ENCODE measurements at regions of chr5 and their contacts with region 1.

Region 1: GRCh38 chr5:170100066-170100943 is 5.4 kb upstream of the FOXI1 start:
- DNase-seq: peak; percentile 38 to 67 (median 64)
- ATAC-seq: peak; percentile 65
- H3K4me3 ChIP-seq: no peak overlapping the region
- H3K4me3 Mint-ChIP-seq: no peak overlapping the region
- H3K27ac ChIP-seq: no peak overlapping the region
- H3K27ac Mint-ChIP-seq: peak overlapping the region in 2 of 9 donors; percentile 6 to 43
- H3K4me1 ChIP-seq: no peaks in the 10 kb centered on the region
- H3K4me1 Mint-ChIP-seq: peaks cover 0 to 10% (median 0%) of the 10 kb centered on the region in 7 donors
- H3K27me3 ChIP-seq: no peaks in the 10 kb centered on the region
- H3K27me3 Mint-ChIP-seq: peaks cover 3 to 16% (median 6%) of the 10 kb centered on the region in 5 donors

Region 2: GRCh38 chr5:170183816-170184687 is 83.7 kb after region 1 on chr5:
- CTCF ChIA-PET with region 1: no interaction called
- POLR2A ChIA-PET with region 1: no interaction called
- intact Hi-C with region 1: loop called (anchors 1 kb)
- DNase-seq: peak in 4 of 9 donors; percentile 4 to 51 (median 8)
- ATAC-seq: peak; percentile 60
- H3K4me3 ChIP-seq: no peak overlapping the region
- H3K4me3 Mint-ChIP-seq: no peak overlapping the region
- H3K27ac ChIP-seq: no peak overlapping the region
- H3K27ac Mint-ChIP-seq: no peak overlapping the region
- H3K4me1 ChIP-seq: no peaks in the 10 kb centered on the region
- H3K4me1 Mint-ChIP-seq: no peaks in the 10 kb centered on the region
- H3K27me3 ChIP-seq: no peaks in the 10 kb centered on the region
- H3K27me3 Mint-ChIP-seq: peaks cover 0 to 12% (median 4%) of the 10 kb centered on the region in 5 donors

Region 3: GRCh38 chr5:170216266-170216864 is 116.1 kb after region 1 on chr5:
- CTCF ChIA-PET with region 1: interaction called, 4 read pairs
- POLR2A ChIA-PET with region 1: no interaction called
- intact Hi-C with region 1: loop called in 1 of 2 experiments (anchors 1 kb)
- DNase-seq: peak in 1 of 9 donors; percentile 26
- ATAC-seq: no peak
- H3K4me3 ChIP-seq: no peak overlapping the region
- H3K4me3 Mint-ChIP-seq: no peak overlapping the region
- H3K27ac ChIP-seq: no peak overlapping the region
- H3K27ac Mint-ChIP-seq: no peak overlapping the region
- H3K4me1 ChIP-seq: no peaks in the 10 kb centered on the region
- H3K4me1 Mint-ChIP-seq: no peaks in the 10 kb centered on the region
- H3K27me3 ChIP-seq: no peaks in the 10 kb centered on the region
- H3K27me3 Mint-ChIP-seq: peaks cover 0 to 34% (median 0%) of the 10 kb centered on the region in 5 donors

Region 4: DNA sequence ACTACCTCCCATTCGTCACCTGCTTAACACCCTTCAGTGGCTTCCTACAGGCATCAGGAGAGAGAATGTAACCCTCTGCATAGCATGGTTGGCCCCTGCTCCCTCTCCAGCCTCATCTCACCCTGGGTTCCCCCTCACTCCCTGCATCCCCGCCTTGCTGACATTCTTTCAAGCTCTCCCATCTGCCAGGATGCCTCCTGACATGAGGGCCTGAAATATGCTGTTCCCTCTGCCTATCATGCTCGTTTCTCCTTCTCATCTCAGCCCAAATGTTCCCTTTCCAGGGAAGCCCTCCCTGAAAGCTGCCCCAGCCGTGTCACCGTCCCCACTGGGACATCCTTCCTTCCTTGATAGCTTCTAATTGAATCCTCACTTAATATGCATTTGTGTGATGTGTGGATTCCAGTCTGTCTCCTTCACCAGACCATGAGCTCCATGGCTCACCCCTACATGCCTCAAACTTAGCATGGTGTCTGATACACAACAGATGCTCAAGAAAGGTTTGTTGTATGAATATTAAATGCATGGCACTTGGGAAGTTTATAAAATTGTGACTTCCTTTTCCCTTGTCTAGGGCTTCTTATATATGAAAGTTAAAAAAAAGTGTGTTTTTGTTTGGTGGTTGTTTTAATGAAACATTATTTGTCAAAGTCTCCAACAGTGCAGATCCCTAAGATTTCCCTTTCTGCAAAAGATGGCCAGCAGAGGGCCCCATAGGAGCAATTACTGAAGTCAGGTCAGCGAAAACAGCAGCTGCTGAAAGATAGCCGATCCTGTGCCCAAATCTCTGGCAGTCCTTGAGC is 125.2 kb after region 1 on chr5:
- CTCF ChIA-PET with region 1: interaction called, 4 read pairs
- POLR2A ChIA-PET with region 1: no interaction called
- intact Hi-C with region 1: loop called (anchors 2 kb)
- DNase-seq: peak; percentile 45 to 78 (median 69)
- ATAC-seq: peak; percentile 75
- H3K4me3 ChIP-seq: no peak overlapping the region
- H3K4me3 Mint-ChIP-seq: peak overlapping the region in 1 of 10 donors; percentile 15
- H3K27ac ChIP-seq: no peak overlapping the region
- H3K27ac Mint-ChIP-seq: peak overlapping the region in 3 of 9 donors; percentile 31 to 75 (median 61)
- H3K4me1 ChIP-seq: no peaks in the 10 kb centered on the region
- H3K4me1 Mint-ChIP-seq: peaks cover 0 to 11% (median 5%) of the 10 kb centered on the region in 7 donors
- H3K27me3 ChIP-seq: no peaks in the 10 kb centered on the region
- H3K27me3 Mint-ChIP-seq: no peaks in the 10 kb centered on the region

Region 5: GRCh38 chr5:170420780-170421412 is 320.6 kb after region 1 on chr5:
- CTCF ChIA-PET with region 1: interaction called, 4 read pairs
- POLR2A ChIA-PET with region 1: no interaction called
- intact Hi-C with region 1: loop called in 1 of 2 experiments (anchors 1 kb)
- DNase-seq: peak; percentile 18 to 66 (median 48)
- ATAC-seq: peak; percentile 80
- H3K4me3 ChIP-seq: no peak overlapping the region
- H3K4me3 Mint-ChIP-seq: no peak overlapping the region
- H3K27ac ChIP-seq: no peak overlapping the region
- H3K27ac Mint-ChIP-seq: peak overlapping the region in 1 of 9 donors; percentile 1
- H3K4me1 ChIP-seq: peaks cover 10 to 19% of the 10 kb centered on the region in 2 donors
- H3K4me1 Mint-ChIP-seq: peaks cover 3 to 34% (median 30%) of the 10 kb centered on the region in 7 donors
- H3K27me3 ChIP-seq: no peaks in the 10 kb centered on the region
- H3K27me3 Mint-ChIP-seq: peaks cover 0 to 35% (median 0%) of the 10 kb centered on the region in 5 donors

Region 6: DNA sequence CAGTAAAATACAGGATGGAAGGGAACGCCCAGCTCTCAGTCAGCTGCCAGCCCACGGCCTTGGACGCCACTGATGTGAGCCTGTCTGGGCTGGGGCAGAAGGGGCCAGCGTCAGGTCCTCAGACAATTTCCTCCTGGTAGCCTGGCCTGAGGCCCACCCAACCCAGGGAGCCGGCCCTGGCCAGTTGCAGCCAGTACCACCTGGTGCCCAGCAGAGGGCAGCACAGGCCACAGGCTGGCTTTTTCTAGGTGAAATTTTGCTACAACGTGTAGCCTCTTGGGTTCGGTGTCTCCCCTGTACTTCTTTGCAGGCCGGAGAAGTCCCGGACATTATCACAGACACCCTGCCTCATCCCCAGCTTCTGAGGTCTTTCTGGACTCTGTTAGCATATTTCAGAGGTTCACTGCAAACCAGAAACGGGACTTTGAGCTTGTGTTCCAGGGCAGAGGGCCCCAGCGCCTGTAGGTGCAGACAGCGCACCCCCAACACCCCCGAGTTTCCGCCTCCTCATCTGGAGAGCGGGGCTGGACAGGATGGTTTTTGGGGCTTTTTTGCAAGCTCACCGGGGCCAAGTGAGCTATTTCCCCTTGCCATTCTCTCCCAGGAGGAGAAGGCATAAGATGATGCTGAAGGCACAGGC is 334.8 kb after region 1 on chr5:
- CTCF ChIA-PET with region 1: no interaction called
- POLR2A ChIA-PET with region 1: no interaction called
- intact Hi-C with region 1: loop called in 1 of 2 experiments (anchors 5 kb)
- DNase-seq: peak; percentile 15 to 61 (median 40)
- ATAC-seq: peak; percentile 88
- H3K4me3 ChIP-seq: no peak overlapping the region
- H3K4me3 Mint-ChIP-seq: no peak overlapping the region
- H3K27ac ChIP-seq: no peak overlapping the region
- H3K27ac Mint-ChIP-seq: no peak overlapping the region
- H3K4me1 ChIP-seq: no peaks in the 10 kb centered on the region
- H3K4me1 Mint-ChIP-seq: no peaks in the 10 kb centered on the region
- H3K27me3 ChIP-seq: no peaks in the 10 kb centered on the region
- H3K27me3 Mint-ChIP-seq: peaks cover 0 to 6% (median 0%) of the 10 kb centered on the region in 5 donors

Region 7: DNA sequence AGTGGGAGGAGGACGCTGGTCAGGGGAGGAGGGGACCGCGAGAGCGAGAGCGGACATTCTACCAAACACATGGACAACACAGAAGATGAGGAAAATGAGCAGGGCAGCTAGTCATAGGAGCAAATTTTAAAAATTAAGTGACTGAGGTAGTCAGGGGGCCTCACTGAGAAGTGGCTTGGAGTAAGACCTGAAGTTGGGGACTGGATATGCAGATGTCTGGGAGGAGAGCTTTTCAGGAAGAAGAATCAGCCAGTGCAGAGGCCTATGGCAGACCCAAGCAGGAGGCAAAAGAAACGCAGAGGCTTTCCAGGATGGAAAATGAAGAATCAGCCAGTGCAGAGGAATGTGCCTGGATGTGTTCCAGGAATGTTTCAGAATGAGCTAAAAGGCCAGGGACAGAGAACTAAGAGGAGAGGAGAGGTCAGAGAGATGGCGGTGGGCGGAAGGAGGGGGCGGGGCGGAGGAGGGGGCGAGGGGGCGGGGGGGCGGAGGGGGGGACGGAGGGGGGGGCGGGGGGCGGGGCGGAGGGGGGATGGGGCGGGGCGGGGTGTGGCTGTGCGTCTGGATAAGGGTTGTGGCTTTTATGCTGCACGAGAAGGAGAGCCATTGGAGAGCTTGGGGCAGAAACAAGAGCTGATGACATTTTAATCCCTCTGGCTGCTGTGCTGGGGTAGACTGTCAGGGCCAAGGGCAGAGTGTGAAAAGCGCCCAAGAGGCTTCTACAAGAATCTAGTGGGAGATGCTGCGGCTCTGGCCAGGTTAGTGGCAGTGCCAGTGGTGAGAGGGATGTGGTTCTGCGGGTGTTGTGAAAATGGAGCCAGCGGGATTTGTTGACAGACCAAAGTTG is 533.2 kb after region 1 on chr5:
- CTCF ChIA-PET with region 1: interaction called, 7 read pairs
- POLR2A ChIA-PET with region 1: no interaction called
- intact Hi-C with region 1: loop called in 1 of 2 experiments (anchors 1 kb)
- DNase-seq: peak in 6 of 9 donors; percentile 5 to 51 (median 30)
- ATAC-seq: peak; percentile 28
- H3K4me3 ChIP-seq: peak overlapping the region; percentile 40
- H3K4me3 Mint-ChIP-seq: peak overlapping the region; percentile 68 to 92 (median 88)
- H3K27ac ChIP-seq: no peak overlapping the region
- H3K27ac Mint-ChIP-seq: peak overlapping the region in 8 of 9 donors; percentile 22 to 90 (median 72)
- H3K4me1 ChIP-seq: peaks cover 0 to 10% of the 10 kb centered on the region in 2 donors
- H3K4me1 Mint-ChIP-seq: peaks cover 8 to 26% (median 19%) of the 10 kb centered on the region in 7 donors
- H3K27me3 ChIP-seq: no peaks in the 10 kb centered on the region
- H3K27me3 Mint-ChIP-seq: peaks cover 0 to 12% (median 1%) of the 10 kb centered on the region in 5 donors